ENCODE measurements at regions of chr3 and their contacts with region 1.

Region 1: DNA sequence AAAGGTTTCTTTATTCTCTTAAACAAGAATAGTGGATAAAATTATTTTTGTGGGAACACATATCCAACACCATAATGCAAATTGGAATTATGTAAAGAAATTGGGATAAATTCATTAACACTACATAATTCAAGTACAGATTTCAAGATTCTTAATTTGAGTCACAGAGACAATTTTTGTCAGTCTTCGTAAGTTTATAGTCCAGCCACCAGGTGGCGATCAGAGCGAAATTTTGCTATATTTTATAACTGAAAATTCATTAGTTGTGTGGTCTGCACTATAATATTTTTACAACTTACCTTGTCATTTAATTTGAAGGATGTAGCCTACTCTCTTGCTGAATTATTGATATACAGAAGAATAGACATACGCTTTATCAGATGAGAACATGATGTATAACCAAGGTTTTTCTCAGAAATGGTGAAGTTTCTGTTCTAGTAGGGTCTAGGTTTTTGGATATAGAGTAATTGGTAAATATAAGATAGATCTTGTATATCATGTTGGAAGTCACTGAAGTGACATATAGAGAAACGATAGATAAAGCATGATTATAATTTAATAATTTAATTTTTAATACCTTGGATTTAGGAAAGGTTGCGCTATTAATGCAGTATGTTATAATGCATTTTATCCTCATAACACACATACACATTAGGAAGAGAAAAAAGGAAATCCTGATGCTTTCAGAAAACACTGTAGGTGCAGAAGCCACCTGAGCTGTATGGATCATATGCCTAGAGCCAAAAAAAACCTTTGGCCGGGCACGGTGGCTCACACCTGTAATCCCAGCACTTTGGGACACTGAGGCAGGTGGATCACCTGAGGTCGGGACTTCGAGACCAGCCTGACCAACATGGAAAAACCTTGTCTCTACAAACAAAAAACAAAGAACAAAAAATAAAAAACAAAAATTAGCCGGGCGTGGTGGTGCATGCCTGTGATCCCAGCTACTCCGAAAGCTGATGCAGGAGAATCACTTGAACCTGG is 31.7 kb downstream of the PLSCR4 start:
- DNase-seq: peak; percentile 61
- H3K4me3 ChIP-seq: no peak overlapping the region
- H3K27ac ChIP-seq: no peak overlapping the region
- H3K4me1 ChIP-seq: peaks cover 21% of the 10 kb centered on the region
- H3K27me3 ChIP-seq: no peaks in the 10 kb centered on the region

Region 2: GRCh38 chr3:145959457-145960088 is 259.6 kb before region 1 on chr3:
- in situ Hi-C with region 1: no loop called
- DNase-seq: no peak
- H3K4me3 ChIP-seq: no peak overlapping the region
- H3K27ac ChIP-seq: no peak overlapping the region
- H3K4me1 ChIP-seq: no peaks in the 10 kb centered on the region
- H3K27me3 ChIP-seq: no peaks in the 10 kb centered on the region

Region 3: DNA sequence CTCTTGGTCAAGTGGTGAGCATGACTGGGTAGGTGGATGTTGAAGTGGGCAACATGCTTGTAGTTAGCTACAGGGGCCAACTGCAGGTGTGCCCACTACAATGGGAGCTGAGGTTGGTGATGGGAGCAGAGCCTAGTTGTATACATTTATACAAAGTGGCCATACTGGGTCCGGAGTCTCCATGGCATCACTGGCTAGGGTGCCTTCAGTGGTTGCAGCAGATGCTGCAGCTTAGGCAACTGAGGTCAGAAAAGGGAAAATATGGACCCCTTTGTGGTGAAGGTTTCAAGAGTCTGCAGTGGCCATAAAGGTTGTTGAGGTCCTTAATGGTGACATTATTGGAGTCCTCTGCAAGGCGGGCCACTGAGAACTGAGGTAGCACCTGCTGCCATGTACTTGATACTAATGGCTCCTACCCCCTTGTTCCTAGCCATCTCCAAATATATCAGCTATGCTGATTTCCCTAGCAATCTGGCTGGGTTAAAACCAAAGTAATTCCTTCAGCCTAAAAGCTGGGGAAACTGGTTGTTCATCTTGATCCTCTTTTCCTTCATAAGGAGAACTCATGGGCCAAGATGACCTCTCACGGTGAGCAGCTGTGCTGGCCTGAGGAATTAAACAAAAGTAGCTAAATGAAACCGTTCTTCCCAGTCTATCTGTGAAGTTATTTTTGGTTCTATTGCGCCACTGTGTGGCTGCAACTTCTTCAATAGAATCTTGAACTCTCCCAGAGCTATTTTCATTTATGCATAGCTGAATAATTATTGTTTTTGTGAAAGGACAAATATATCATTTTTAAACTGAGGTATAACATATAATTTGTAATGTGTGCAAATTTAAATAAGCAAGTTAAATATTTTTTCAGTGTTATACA is 107.7 kb after region 1 on chr3:
- in situ Hi-C with region 1: loop called (anchors 10 kb)
- DNase-seq: peak; percentile 77
- H3K4me3 ChIP-seq: no peak overlapping the region
- H3K27ac ChIP-seq: no peak overlapping the region
- H3K4me1 ChIP-seq: no peaks in the 10 kb centered on the region
- H3K27me3 ChIP-seq: no peaks in the 10 kb centered on the region

Region 4: GRCh38 chr3:146374146-146374545 is 155.0 kb after region 1 on chr3:
- in situ Hi-C with region 1: no loop called
- DNase-seq: peak; percentile 28
- H3K4me3 ChIP-seq: no peak overlapping the region
- H3K27ac ChIP-seq: no peak overlapping the region
- H3K4me1 ChIP-seq: 0 out of 2 replicates have a peak, but pooled peaks cover 11% of the 10 kb centered on the region
- H3K27me3 ChIP-seq: no peaks in the 10 kb centered on the region

Region 5: DNA sequence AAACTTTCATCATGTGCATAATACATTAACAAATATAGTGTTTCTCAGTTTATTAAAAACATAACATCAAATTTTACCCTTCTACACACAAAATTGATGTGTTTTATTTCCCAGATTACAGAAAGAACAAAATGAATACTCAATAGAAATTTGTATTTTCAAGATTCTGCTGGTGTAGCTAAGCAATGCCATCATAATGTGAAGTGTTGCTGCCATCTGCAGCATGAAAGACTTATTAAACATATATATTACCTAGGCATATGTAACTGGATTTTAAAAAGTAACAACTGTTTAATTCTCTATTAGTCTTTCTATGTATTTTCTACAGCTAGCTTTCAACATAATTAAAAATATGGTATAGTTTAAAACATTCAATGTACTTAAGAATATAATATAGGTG is 358.5 kb after region 1 on chr3:
- in situ Hi-C with region 1: loop called (anchors 10 kb)
- DNase-seq: peak; percentile 70
- H3K4me3 ChIP-seq: no peak overlapping the region
- H3K27ac ChIP-seq: no peak overlapping the region
- H3K4me1 ChIP-seq: no peaks in the 10 kb centered on the region
- H3K27me3 ChIP-seq: no peaks in the 10 kb centered on the region

Measured in GM23248 (cell line).